Ascending aorta (tissue), 2 donors: ENCODE measurements at regions of chr13 and their contacts with region 1.

Region 1: GRCh38 chr13:109786457-109787134 is at the start of gene IRS2:
- DNase-seq: peak; percentile 90 to 97
- H3K4me3 ChIP-seq: peak within 1 kb of the TSS; percentile 85
- H3K27ac ChIP-seq: peak within 1 kb of the TSS; percentile 91 to 93
- H3K4me1 ChIP-seq: peaks cover 14 to 22% of the 10 kb centered on the region in 2 donors
- H3K27me3 ChIP-seq: no peaks in the 10 kb centered on the region
- CTCF ChIP-seq: no peak
- total RNA-seq, gene IRS2: 42.4 TPM

Region 2: DNA sequence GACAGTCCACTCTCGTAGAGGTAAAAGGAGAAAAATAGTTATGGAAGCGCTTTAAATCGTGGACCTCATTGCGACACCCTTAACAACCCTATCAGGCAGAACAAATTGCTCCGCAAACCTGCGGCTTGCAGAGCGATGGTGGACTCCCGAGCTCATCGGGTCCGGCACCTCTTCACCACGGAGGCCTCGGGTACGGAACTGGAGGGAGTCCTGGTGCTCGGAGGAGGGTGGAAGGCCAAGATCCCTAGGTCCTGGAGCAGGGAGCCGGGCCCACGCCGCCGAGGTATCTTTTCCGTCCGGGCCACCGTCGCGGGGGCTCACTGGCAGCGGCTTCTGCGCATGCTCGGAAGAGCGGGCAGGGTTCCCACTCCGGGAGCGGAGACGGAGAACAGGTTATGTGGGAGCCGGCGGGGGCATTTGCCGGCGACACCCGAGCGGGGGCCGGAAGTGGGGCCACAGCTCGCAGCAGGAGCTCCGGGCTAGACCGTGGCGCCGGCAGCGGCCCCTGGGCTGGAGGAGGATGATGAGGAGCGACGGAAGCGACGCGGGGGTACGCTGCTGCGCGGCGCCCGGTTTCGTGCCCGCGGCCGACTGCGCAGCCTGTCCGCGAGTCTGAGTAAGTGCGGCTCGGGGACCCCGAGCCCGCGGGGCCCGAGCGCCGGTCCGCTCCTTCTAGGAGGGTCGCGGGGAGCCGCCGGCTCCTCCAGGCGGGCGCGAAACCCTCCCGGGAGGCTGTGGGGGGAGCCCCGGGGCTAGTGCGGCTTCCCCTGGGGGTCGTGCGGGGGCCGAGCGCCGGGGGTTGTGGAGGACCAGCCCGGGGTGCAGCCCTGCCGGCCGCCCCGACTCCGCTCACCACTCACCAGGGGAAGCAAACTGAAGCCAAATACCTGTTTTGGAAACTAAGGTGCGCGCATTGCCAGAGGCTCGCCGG is 1568.3 kb before region 1 on chr13 and contains the start of gene ABHD13:
- intact Hi-C with region 1: loop called (anchors 10 kb)
- DNase-seq: peak; percentile 46 to 94
- H3K4me3 ChIP-seq: peak within 1 kb of the TSS; percentile 74 to 92
- H3K27ac ChIP-seq: peak within 1 kb of the TSS; percentile 74 to 84
- H3K4me1 ChIP-seq: peaks cover 4 to 17% of the 10 kb centered on the region in 2 donors
- H3K27me3 ChIP-seq: no peaks in the 10 kb centered on the region
- CTCF ChIP-seq: peak in 1 of 3 experiments; percentile 7
- total RNA-seq, gene ABHD13: 4.5 TPM

Region 3: DNA sequence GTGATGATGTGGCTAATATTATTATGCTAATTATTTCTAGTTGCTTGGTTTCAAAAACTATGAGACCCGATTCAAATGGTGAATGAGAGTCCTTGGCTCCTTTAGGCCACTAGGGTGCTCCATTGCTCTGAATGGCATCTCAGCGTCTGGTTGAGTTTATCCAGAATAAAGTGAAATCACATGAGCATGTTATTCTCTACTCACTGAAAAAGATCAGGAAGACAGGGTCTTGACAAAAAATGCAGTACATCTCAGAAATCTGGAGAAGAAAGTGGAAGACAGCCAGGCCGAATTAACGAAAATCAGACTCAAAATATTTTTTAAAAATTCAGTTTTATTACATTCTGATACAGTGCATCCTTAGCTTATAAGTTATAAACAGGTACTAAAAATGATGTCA is 641.0 kb before region 1 on chr13:
- intact Hi-C with region 1: loop called (anchors 2 kb)
- DNase-seq: no peak
- H3K4me3 ChIP-seq: no peak overlapping the region
- H3K27ac ChIP-seq: no peak overlapping the region
- H3K4me1 ChIP-seq: peaks cover 0 to 2% of the 10 kb centered on the region in 2 donors
- H3K27me3 ChIP-seq: peaks cover 2% of the 10 kb centered on the region
- CTCF ChIP-seq: peak; percentile 69 to 86 (median 79)

Region 4: GRCh38 chr13:109256866-109257760 is 529.5 kb before region 1 on chr13:
- intact Hi-C with region 1: loop called (anchors 2 kb)
- DNase-seq: peak in 1 of 2 donors; percentile 80
- H3K4me3 ChIP-seq: no peak overlapping the region
- H3K27ac ChIP-seq: peak overlapping the region; percentile 55 to 56
- H3K4me1 ChIP-seq: peaks cover 3% of the 10 kb centered on the region in 2 donors
- H3K27me3 ChIP-seq: no peaks in the 10 kb centered on the region
- CTCF ChIP-seq: no peak

Region 5: GRCh38 chr13:109454167-109454917 is 332.3 kb before region 1 on chr13:
- intact Hi-C with region 1: loop called (anchors 5 kb)
- DNase-seq: peak in 1 of 2 donors; percentile 77
- H3K4me3 ChIP-seq: no peak overlapping the region
- H3K27ac ChIP-seq: peak overlapping the region; percentile 65 to 79
- H3K4me1 ChIP-seq: peaks cover 0 to 3% of the 10 kb centered on the region in 2 donors
- H3K27me3 ChIP-seq: no peaks in the 10 kb centered on the region
- CTCF ChIP-seq: no peak

Region 6: GRCh38 chr13:109743706-109744453 is 42.7 kb before region 1 on chr13:
- intact Hi-C with region 1: no loop called
- DNase-seq: no peak
- H3K4me3 ChIP-seq: no peak overlapping the region
- H3K27ac ChIP-seq: no peak overlapping the region
- H3K4me1 ChIP-seq: no peaks in the 10 kb centered on the region
- H3K27me3 ChIP-seq: no peaks in the 10 kb centered on the region
- CTCF ChIP-seq: no peak

Region 7: GRCh38 chr13:109816112-109816818 is 29.7 kb after region 1 on chr13:
- intact Hi-C with region 1: no loop called
- DNase-seq: no peak
- H3K4me3 ChIP-seq: no peak overlapping the region
- H3K27ac ChIP-seq: no peak overlapping the region
- H3K4me1 ChIP-seq: no peaks in the 10 kb centered on the region
- H3K27me3 ChIP-seq: no peaks in the 10 kb centered on the region
- CTCF ChIP-seq: no peak

Region 8: GRCh38 chr13:110006304-110006703 is 219.7 kb after region 1 on chr13:
- intact Hi-C with region 1: no loop called
- DNase-seq: no peak
- H3K4me3 ChIP-seq: no peak overlapping the region
- H3K27ac ChIP-seq: no peak overlapping the region
- H3K4me1 ChIP-seq: no peaks in the 10 kb centered on the region
- H3K27me3 ChIP-seq: no peaks in the 10 kb centered on the region
- CTCF ChIP-seq: no peak

Region 9: DNA sequence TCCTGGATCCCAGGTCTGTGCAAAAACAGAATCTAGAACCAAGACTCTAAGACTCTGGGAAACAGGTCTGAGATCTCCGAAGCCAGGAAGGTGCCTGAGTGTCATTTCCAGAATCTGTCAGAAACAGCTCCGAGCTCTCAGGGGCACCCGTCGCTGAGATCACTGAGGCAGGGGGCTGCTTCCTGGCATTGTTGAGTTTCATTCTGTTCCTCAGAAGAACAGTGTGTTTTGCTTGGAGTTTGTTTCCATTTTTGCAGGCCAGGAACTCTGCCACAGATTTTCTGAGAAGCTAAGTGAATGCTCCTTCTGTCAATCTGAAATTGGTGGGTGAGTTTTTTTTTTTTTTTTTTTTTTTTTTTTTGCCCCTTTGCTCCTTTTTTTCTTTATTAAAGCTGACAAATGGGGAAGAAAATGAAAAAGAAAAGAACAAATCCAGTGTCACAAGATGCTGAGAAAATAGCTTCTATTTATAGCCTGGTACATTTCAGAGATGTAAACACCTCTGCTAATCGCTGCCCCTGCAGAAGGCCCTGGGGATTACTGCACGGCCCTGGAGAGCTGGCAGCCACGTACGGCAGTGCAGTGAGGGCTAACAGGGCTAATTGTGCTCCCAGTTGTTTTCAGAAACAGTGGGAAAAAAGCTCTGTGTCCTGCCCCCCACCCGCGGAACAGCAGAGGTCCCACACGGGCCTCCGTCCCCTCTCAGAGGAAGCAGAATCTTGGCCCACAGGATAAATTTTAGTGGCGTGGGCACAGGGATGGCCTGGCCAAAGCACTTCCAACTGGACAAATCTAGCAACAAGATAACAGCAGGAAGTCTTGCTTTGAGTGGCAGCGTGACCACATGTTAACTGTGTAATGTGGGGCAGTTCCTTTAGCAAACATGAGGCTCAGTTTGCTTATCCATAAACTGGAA is 237.4 kb after region 1 on chr13:
- intact Hi-C with region 1: loop called (anchors 1 kb)
- DNase-seq: peak; percentile 30 to 82
- H3K4me3 ChIP-seq: peak overlapping the region in 1 of 2 donors; percentile 34
- H3K27ac ChIP-seq: peak overlapping the region; percentile 84
- H3K4me1 ChIP-seq: peaks cover 10 to 23% of the 10 kb centered on the region in 2 donors
- H3K27me3 ChIP-seq: no peaks in the 10 kb centered on the region
- CTCF ChIP-seq: no peak

Region 10: DNA sequence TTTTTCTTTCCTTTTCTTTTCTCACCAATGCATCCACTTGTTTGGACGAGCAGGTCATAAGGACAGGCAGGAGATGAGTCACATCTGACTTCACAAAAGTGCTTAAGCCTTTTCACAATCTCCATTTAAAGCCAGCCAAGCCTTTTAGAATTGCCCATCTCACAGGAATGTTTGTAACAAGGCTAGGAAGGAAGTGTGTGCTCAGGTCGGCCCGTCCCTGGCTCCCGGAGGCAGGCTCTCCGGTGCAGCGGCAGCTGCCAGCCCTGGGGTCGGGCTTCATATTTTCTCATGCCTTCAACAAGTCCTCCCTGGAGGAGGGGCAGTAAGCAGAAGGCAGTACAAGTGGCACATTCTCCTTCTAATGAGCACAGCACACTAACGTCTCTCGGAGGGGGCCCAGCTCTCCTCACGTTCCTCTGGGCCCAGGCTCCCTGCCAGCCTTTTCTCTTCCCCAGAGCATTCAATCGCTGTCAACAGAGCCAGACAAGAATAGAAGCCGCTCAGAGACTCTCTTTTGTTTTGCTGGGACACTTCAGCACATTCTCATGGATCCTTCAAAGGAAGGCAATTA is 339.9 kb after region 1 on chr13:
- intact Hi-C with region 1: loop called (anchors 5 kb)
- DNase-seq: peak in 1 of 2 donors; percentile 84
- H3K4me3 ChIP-seq: peak overlapping the region in 1 of 2 donors; percentile 47
- H3K27ac ChIP-seq: peak overlapping the region; percentile 83 to 85
- H3K4me1 ChIP-seq: peaks cover 0 to 27% of the 10 kb centered on the region in 2 donors
- H3K27me3 ChIP-seq: no peaks in the 10 kb centered on the region
- CTCF ChIP-seq: no peak